ENCODE measurements at regions of chr4 and their contacts with region 1.

Region 1: GRCh38 chr4:40412388-40412787 is 77.3 kb downstream of the CHRNA9 start:
- DNase-seq: no peak
- ATAC-seq: no peak
- H3K4me3 ChIP-seq: no peak overlapping the region
- H3K27ac ChIP-seq: no peak overlapping the region
- H3K4me1 ChIP-seq: no peaks in the 10 kb centered on the region
- H3K27me3 ChIP-seq: no peaks in the 10 kb centered on the region
- CTCF ChIP-seq: no peak

Region 2: GRCh38 chr4:40255393-40256281 is 156.8 kb before region 1 on chr4:
- CTCF ChIA-PET with region 1: no interaction called
- POLR2A ChIA-PET with region 1: no interaction called
- in situ Hi-C with region 1: no loop called
- intact Hi-C with region 1: no loop called
- DNase-seq: peak; percentile 79
- ATAC-seq: peak; percentile 91
- H3K4me3 ChIP-seq: peak overlapping the region in 1 of 2 experiments; percentile 19; a peak in 1 of 4 replicates
- H3K27ac ChIP-seq: peak overlapping the region; percentile 93
- H3K4me1 ChIP-seq: peaks cover 32% of the 10 kb centered on the region
- H3K27me3 ChIP-seq: no peaks in the 10 kb centered on the region
- CTCF ChIP-seq: no peak

Region 3: GRCh38 chr4:40395908-40396793 is 16.2 kb before region 1 on chr4:
- CTCF ChIA-PET with region 1: interaction called, 11 read pairs
- POLR2A ChIA-PET with region 1: no interaction called
- in situ Hi-C with region 1: no loop called
- intact Hi-C with region 1: no loop called
- DNase-seq: no peak
- ATAC-seq: peak; percentile 42; the same call in 1 of the 2 replicates
- H3K4me3 ChIP-seq: no peak overlapping the region
- H3K27ac ChIP-seq: peak overlapping the region; percentile 51
- H3K4me1 ChIP-seq: peaks cover 4% of the 10 kb centered on the region; the same call in 1 of the 2 replicates
- H3K27me3 ChIP-seq: no peaks in the 10 kb centered on the region
- CTCF ChIP-seq: no peak

Region 4: GRCh38 chr4:40536032-40536431 is 123.6 kb after region 1 on chr4:
- CTCF ChIA-PET with region 1: no interaction called
- POLR2A ChIA-PET with region 1: no interaction called
- in situ Hi-C with region 1: no loop called
- intact Hi-C with region 1: no loop called
- DNase-seq: no peak
- ATAC-seq: no peak
- H3K4me3 ChIP-seq: no peak overlapping the region
- H3K27ac ChIP-seq: no peak overlapping the region
- H3K4me1 ChIP-seq: no peaks in the 10 kb centered on the region
- H3K27me3 ChIP-seq: no peaks in the 10 kb centered on the region
- CTCF ChIP-seq: no peak

Measured in Panc1 (cell line).